ENCODE measurements at regions of chr6 and their contacts with region 1.

Region 1: DNA sequence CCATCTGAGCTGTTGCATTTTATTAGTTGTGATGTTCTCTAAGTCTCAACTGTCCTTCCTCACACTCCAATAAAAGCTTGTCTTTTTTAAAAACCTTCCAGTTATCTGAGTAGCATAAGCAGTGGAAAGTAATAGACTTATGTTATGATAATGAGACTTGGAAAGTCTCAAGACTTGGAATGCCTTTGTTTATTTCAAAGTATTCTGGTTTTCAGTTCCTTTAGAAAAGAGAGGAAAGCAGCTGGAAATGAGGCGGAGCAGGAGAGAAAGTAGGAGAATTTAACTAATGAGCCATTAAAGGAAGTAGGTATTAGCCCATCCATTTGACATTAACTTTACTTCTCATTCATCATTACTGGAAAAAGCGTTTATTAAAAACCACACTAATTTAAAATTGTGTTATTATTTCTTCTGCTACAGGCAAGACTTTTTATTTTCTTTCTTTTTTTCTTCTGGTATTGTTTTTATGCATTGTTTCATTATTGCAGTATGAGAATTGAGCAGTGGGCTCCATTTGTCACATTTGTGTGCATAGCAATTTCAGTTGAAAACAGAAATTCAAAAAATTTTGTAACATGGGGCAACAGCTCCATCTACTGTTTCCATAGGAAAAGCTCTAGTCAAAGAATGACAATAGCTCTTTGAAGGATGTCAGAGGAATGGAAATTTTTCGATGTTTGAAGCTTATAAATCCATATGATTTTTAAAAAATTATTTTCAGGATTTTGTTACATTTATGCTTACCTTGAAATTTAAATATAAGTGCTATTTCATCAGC is 194.8 kb downstream of the COL9A1 start:
- DNase-seq: peak in 3 of 14 experiments; percentile 44 to 59 (median 55)
- ATAC-seq: no peak
- H3K4me3 ChIP-seq: no peak overlapping the region
- H3K4me3 Mint-ChIP-seq: no peak overlapping the region
- H3K27ac ChIP-seq: no peak overlapping the region
- H3K27ac Mint-ChIP-seq: no peak overlapping the region
- H3K4me1 ChIP-seq: no peaks in the 10 kb centered on the region
- H3K4me1 Mint-ChIP-seq: no peaks in the 10 kb centered on the region
- H3K27me3 ChIP-seq: peaks cover 0 to 7% of the 10 kb centered on the region in 2 experiments
- H3K27me3 Mint-ChIP-seq: peaks cover 17% of the 10 kb centered on the region
- CTCF ChIP-seq: peak; percentile 77

Region 2: GRCh38 chr6:68343901-68344300 is 1764.1 kb before region 1 on chr6:
- CTCF ChIA-PET with region 1: no interaction called
- POLR2A ChIA-PET with region 1: no interaction called
- intact Hi-C with region 1: loop called in 1 of 2 experiments (anchors 5 kb)
- DNase-seq: peak in 3 of 14 experiments; percentile 1 to 6 (median 5)
- ATAC-seq: no peak
- H3K4me3 ChIP-seq: no peak overlapping the region
- H3K4me3 Mint-ChIP-seq: no peak overlapping the region
- H3K27ac ChIP-seq: no peak overlapping the region
- H3K27ac Mint-ChIP-seq: no peak overlapping the region
- H3K4me1 ChIP-seq: no peaks in the 10 kb centered on the region
- H3K4me1 Mint-ChIP-seq: no peaks in the 10 kb centered on the region
- H3K27me3 ChIP-seq: no peaks in the 10 kb centered on the region
- H3K27me3 Mint-ChIP-seq: no peaks in the 10 kb centered on the region
- CTCF ChIP-seq: no peak

Region 3: DNA sequence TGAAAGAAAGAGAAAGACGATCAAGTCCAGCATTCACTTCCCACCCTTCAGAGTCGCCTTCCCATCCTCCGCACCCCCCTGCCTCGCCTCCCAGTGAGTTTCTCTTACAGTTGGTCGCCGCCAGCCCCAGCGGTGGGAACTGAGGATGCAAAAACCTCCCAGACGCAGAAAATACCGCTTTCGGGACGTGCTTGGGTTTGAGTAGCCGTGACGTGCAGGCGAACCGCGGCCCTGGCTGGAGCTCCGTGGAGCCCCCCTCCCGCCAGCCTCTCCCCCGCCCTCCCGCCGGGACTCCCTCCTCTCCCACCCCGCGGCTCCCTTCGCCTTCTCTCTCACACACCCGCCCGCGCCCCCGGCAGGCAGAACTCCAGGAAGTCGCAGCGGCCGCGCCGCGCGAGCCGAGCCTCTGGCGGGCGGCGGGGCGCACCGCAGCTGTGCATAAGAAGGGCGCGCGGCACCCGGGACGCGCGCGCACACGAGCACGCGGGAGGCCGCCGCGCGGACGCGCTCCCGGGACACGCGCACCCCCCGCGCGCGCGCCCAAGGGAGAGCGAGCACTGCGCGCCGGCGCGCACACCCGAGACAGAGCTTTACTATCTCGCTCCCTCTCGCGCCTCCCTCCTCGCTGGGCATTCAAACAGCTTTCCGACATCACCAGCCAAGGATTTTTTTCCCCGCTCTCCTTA is 1473.2 kb before region 1 on chr6 and contains the start of gene ADGRB3:
- CTCF ChIA-PET with region 1: no interaction called
- POLR2A ChIA-PET with region 1: no interaction called
- intact Hi-C with region 1: loop called in 1 of 2 experiments (anchors 10 kb)
- DNase-seq: peak in 5 of 14 experiments; percentile 10 to 63 (median 46)
- ATAC-seq: peak; percentile 51
- H3K4me3 ChIP-seq: peak within 1 kb of the TSS; percentile 49
- H3K4me3 Mint-ChIP-seq: peak within 1 kb of the TSS; percentile 79
- H3K27ac ChIP-seq: no peak within 1 kb of the TSS
- H3K27ac Mint-ChIP-seq: no peak within 1 kb of the TSS
- H3K4me1 ChIP-seq: peaks cover 12% of the 10 kb centered on the region
- H3K4me1 Mint-ChIP-seq: peaks cover 23% of the 10 kb centered on the region
- H3K27me3 ChIP-seq: peaks cover 15 to 40% of the 10 kb centered on the region in 2 experiments
- H3K27me3 Mint-ChIP-seq: peaks cover 63% of the 10 kb centered on the region
- CTCF ChIP-seq: no peak
- total RNA-seq, gene ADGRB3: not detected

Region 4: DNA sequence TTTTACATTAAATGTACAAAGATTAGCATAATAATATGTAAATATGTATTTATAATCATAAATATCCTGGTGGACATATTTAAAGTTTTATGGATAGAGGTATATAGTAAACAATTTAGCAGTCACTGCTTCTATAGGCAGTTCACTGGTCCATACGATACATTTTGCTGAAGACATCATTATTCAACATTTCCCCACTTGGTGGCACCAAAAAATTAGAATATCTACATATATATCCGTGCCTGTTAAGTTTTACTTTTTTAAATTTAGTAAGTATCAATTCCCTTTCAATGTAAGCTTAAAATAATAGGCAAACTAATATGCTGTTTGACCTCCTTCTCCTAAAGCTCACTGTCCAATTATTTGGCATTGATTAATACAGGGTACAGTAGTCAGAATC is 375.4 kb before region 1 on chr6:
- CTCF ChIA-PET with region 1: no interaction called
- POLR2A ChIA-PET with region 1: no interaction called
- intact Hi-C with region 1: loop called (anchors 5 kb)
- DNase-seq: peak in 3 of 14 experiments; percentile 23 to 33 (median 29)
- ATAC-seq: no peak
- H3K4me3 ChIP-seq: no peak overlapping the region
- H3K4me3 Mint-ChIP-seq: no peak overlapping the region
- H3K27ac ChIP-seq: no peak overlapping the region
- H3K27ac Mint-ChIP-seq: no peak overlapping the region
- H3K4me1 ChIP-seq: no peaks in the 10 kb centered on the region
- H3K4me1 Mint-ChIP-seq: peaks cover 10% of the 10 kb centered on the region
- H3K27me3 ChIP-seq: no peaks in the 10 kb centered on the region
- H3K27me3 Mint-ChIP-seq: no peaks in the 10 kb centered on the region
- CTCF ChIP-seq: no peak

Region 5: DNA sequence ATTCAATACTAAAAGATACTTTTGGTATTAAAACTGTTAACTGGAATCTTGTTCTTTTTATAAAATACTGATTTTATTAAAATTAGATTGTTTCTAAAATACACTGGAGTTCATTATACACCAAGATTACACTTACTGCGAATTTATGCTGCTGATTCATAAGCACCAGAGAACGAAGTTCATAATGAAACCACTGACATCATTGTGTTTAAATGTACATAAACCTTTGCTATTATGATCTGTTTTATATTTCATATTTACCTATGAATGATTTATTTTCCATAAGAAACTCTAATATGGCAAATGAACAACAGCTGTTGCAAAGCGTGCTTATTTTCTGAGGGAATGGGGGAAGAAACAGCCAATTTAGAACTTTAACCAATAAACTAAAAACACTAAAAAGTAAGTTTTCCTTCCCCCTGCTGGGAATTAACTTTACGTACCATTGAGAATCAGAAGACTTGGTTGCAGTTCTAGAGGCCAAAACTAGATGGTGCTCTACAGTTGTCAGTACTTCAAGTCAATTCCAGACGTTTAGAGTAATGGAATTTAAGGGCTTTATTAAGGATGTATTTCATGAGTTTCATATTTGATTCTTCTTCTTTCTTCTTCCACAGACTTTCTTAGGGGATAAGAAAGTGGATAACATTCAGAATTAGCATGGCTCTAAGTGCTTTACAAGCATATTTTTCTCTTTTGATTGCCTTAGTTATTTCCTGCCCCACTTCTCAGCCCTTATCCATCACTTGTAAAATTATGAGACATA is 272.4 kb before region 1 on chr6:
- CTCF ChIA-PET with region 1: no interaction called
- POLR2A ChIA-PET with region 1: no interaction called
- intact Hi-C with region 1: loop called (anchors 2 to 10 kb)
- DNase-seq: peak in 4 of 14 experiments; percentile 24 to 67 (median 57)
- ATAC-seq: peak; percentile 77
- H3K4me3 ChIP-seq: no peak overlapping the region
- H3K4me3 Mint-ChIP-seq: no peak overlapping the region
- H3K27ac ChIP-seq: no peak overlapping the region
- H3K27ac Mint-ChIP-seq: no peak overlapping the region
- H3K4me1 ChIP-seq: no peaks in the 10 kb centered on the region
- H3K4me1 Mint-ChIP-seq: peaks cover 7% of the 10 kb centered on the region
- H3K27me3 ChIP-seq: peaks cover 4 to 11% of the 10 kb centered on the region in 2 experiments
- H3K27me3 Mint-ChIP-seq: peaks cover 29% of the 10 kb centered on the region
- CTCF ChIP-seq: peak; percentile 88

Region 6: GRCh38 chr6:70253923-70254322 is 145.9 kb after region 1 on chr6:
- CTCF ChIA-PET with region 1: no interaction called
- POLR2A ChIA-PET with region 1: no interaction called
- intact Hi-C with region 1: no loop called
- DNase-seq: no peak
- ATAC-seq: no peak
- H3K4me3 ChIP-seq: no peak overlapping the region
- H3K4me3 Mint-ChIP-seq: no peak overlapping the region
- H3K27ac ChIP-seq: no peak overlapping the region
- H3K27ac Mint-ChIP-seq: no peak overlapping the region
- H3K4me1 ChIP-seq: no peaks in the 10 kb centered on the region
- H3K4me1 Mint-ChIP-seq: no peaks in the 10 kb centered on the region
- H3K27me3 ChIP-seq: peaks cover 0 to 5% of the 10 kb centered on the region in 2 experiments
- H3K27me3 Mint-ChIP-seq: peaks cover 14% of the 10 kb centered on the region
- CTCF ChIP-seq: no peak

Measured in CD4-positive, alpha-beta T cell (primary cell).